ENCODE measurements at regions of chr10 and their contacts with region 1.

Region 1: GRCh38 chr10:107299606-107300005 is 135.1 kb upstream of the SORCS1 start:
- DNase-seq: no peak
- H3K4me3 ChIP-seq: no peak overlapping the region
- H3K27ac ChIP-seq: no peak overlapping the region
- H3K4me1 ChIP-seq: no peaks in the 10 kb centered on the region
- H3K27me3 ChIP-seq: no peaks in the 10 kb centered on the region
- CTCF ChIP-seq: no peak
- POLR2A ChIP-seq: no peak

Region 2: DNA sequence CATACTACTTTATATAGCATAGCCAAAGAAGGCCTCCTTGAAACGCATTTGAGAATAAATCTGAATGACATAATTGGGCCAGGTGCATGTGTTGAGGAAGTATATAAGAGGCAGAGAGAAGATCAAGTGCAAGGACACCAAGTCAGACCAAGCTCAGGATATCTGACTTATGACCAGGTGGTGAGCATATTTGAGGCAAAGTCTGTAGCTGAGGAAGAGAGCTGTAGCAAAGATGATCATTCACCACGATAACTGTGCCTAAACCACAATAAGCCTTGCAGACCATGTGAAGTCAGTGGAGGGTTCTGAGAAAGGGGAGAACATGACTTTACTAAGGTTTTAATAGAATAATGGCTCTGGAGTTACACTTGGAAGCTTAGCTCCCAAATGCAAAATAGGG is 427.4 kb before region 1 on chr10:
- intact Hi-C with region 1: loop called (anchors 5 kb)
- DNase-seq: no peak
- H3K4me3 ChIP-seq: no peak overlapping the region
- H3K27ac ChIP-seq: no peak overlapping the region
- H3K4me1 ChIP-seq: no peaks in the 10 kb centered on the region
- H3K27me3 ChIP-seq: no peaks in the 10 kb centered on the region
- CTCF ChIP-seq: no peak
- POLR2A ChIP-seq: no peak

Measured in breast epithelium (tissue), 4 donors.